ENCODE measurements at regions of chr11 and their contacts with region 1.

Region 1: DNA sequence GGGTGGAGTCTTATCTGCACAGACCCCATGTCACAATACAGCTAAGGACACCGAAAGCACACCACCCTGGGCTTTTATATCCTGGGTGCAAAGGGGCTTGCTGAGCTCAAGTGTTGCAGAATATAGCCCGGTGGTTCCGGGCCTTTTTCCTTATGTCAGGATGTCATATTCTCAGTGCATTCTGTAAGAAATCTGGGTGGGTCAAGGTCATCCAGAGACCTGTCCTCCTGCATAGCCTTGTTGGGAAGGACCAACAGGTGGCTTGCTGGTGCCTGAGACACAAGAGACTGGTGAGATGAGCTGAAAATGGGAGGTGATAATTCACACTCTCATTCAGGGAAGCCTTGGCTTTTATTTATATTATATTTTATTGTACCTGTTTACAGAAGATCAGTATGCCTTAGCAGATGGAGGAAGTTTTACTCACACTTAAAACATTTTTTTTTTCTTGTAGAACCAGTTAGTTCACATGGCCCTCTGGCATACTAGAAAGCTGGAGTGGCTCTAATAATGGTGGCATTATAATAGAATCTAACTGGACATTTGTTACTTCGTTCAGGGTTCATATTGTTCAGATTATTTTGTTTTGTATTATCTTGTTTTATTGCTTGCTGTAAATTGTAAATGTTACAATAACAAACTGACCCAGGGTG is 14.6 kb upstream of the TMEM123 start:
- DNase-seq: no peak
- CTCF ChIP-seq: no peak

Region 2: GRCh38 chr11:102456381-102456780 is 10.8 kb before region 1 on chr11:
- CTCF ChIA-PET with region 1: interaction called, 11 read pairs
- POLR2A ChIA-PET with region 1: no interaction called
- DNase-seq: no peak
- CTCF ChIP-seq: no peak

Region 3: GRCh38 chr11:102488208-102488607 is 21.0 kb after region 1 on chr11:
- CTCF ChIA-PET with region 1: no interaction called
- POLR2A ChIA-PET with region 1: no interaction called
- DNase-seq: peak; percentile 20
- CTCF ChIP-seq: no peak